ENCODE measurements at regions of chr10 and their contacts with region 1.

Region 1: GRCh38 chr10:93746844-93747284 is 10.9 kb upstream of the LGI1 start:
- DNase-seq: peak; percentile 42

Region 2: GRCh38 chr10:93702211-93703001 is 44.5 kb before region 1 on chr10 and contains the start of gene FRA10AC1:
- CTCF ChIA-PET with region 1: interaction called, 10 read pairs
- POLR2A ChIA-PET with region 1: interaction called, 12 read pairs
- DNase-seq: peak; percentile 90

Region 3: DNA sequence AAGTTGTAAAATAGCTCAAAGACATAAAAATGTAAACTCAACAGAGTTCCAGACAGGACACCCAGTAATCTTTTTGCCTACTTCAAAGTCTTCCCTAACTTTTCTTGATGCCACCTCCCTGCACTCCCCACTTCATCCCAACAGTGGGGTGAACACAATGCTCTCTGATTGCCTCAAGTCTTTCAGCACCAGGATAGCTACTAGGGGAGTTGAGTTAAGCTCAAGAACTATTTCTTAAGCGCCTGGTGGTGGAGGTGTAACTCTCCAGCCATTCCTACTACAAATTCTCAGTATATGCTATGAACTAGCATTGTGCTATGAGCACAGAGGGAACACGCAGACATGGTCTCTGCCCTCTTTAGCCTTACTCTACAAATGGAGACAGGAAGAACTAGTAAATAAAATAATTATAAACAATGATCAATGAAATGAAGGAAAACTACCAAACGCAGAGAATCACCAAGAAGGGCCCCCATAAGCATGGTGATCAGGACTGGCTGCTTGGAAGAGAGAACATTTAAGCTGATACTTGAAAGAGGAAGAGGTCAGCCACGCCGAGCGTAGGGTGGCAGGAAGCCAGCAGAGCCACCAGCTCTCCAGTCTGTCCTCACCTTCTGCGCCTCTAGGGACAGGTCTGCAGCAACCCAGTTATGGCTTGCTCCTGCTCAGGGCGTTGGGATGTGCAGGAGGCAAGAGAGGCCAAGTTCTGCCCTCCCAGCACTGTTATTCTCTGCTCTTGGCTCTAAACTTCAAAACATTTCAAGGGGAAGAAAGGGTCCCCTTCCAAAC is 27.7 kb before region 1 on chr10:
- CTCF ChIA-PET with region 1: no interaction called
- POLR2A ChIA-PET with region 1: no interaction called
- DNase-seq: no peak

Region 4: DNA sequence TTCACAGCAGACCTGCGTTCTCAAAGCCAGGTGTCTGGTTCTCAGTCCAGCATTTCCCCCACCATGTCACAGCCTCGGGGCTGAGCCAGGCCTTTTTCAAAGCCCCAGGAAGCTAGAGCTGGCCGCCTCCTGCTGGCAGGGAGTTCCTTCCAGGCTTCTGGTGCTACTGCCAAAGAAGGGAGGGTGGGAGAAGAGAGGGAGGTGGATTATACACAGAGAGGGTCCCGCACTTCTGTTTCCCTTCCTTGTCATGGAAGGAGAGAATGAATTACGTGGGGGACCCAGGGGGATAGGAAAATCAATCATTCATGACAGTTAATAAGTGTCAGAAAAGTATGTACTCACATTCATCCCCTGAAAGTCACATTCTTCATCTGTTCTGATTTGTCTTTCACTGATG is 10.3 kb after region 1 on chr10:
- CTCF ChIA-PET with region 1: interaction called, 26 read pairs
- POLR2A ChIA-PET with region 1: interaction called, 4 read pairs
- DNase-seq: peak; percentile 58

Region 5: DNA sequence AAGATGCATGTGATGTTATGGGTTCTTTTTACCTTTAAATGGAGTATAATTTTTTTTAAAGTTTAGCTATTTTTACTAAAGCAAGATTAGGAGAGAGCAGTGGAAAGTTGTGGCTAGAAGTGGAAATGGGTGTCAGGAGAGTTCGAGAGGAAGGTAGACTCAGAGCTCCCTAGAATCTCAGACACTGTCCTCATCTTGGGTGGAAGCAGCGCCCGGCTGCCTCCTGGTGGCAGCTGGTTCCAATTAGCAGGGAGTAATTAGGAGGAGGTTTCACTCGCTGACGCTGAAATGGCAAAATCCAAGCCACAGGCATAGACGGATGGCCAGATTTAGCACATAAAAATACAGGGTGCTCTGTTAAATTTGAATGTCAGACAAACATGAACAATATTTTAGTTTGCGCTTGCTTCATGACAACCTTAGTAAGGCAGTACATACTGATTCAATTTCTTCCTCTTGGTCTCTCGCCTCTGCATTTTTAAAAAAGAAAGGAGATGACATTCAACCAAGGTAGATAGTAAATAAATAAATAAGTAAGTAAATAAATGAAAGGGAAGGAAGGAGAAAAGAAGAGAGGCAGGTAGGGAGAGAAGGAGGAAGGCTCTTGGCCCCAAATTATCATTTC is 69.4 kb after region 1 on chr10:
- CTCF ChIA-PET with region 1: interaction called, 97 read pairs
- POLR2A ChIA-PET with region 1: interaction called, 14 read pairs
- DNase-seq: peak; percentile 72

Region 6: DNA sequence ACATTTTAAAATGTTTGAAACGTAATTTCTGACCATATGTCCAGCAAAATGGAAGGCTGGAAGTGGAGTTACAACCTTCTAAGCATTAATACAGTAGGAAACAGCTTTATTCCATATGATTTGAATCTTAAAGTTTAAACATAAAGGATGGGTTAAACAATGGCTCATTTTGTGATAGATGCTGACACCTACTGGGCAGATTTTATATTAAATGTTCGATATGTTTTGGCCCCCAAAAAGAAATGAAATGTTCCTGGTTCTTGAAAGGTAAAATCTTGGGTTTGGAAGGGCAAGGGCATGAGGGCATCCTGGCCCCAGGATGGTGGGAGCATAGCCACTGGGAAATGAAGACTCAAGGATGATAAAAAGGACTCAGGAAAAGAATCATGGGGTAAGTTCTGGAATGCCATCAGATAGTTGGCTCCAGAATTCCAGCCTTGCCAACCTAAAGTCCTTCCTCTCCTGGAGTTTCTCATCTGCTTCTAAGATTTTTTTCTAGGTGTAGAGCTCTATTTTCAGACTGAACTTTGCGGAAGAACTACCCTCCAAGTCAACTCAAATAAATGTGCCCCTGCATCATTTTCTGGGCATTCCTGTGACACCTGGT is 112.3 kb after region 1 on chr10:
- CTCF ChIA-PET with region 1: interaction called, 13 read pairs
- POLR2A ChIA-PET with region 1: no interaction called
- DNase-seq: peak; percentile 20